ENCODE measurements at regions of chr7 and their contacts with region 1.

Region 1: GRCh38 chr7:129343099-129343700 is 91.0 kb upstream of the STRIP2 start:
- DNase-seq: no peak
- H3K4me3 ChIP-seq: no peak overlapping the region
- H3K27ac ChIP-seq: no peak overlapping the region
- H3K27me3 ChIP-seq: no peaks in the 10 kb centered on the region
- CTCF ChIP-seq: peak; percentile 76

Region 2: GRCh38 chr7:129308047-129308446 is 35.2 kb before region 1 on chr7:
- CTCF ChIA-PET with region 1: no interaction called
- POLR2A ChIA-PET with region 1: no interaction called
- DNase-seq: no peak
- H3K4me3 ChIP-seq: no peak overlapping the region
- H3K27ac ChIP-seq: no peak overlapping the region
- H3K27me3 ChIP-seq: no peaks in the 10 kb centered on the region
- CTCF ChIP-seq: no peak

Region 3: GRCh38 chr7:129332284-129333035 is 10.7 kb before region 1 on chr7:
- CTCF ChIA-PET with region 1: interaction called, 35 read pairs
- POLR2A ChIA-PET with region 1: no interaction called
- DNase-seq: peak; percentile 66
- H3K4me3 ChIP-seq: no peak overlapping the region; the same call in 1 of the 2 replicates
- H3K27ac ChIP-seq: peak overlapping the region; percentile 87
- H3K27me3 ChIP-seq: no peaks in the 10 kb centered on the region
- CTCF ChIP-seq: no peak

Region 4: DNA sequence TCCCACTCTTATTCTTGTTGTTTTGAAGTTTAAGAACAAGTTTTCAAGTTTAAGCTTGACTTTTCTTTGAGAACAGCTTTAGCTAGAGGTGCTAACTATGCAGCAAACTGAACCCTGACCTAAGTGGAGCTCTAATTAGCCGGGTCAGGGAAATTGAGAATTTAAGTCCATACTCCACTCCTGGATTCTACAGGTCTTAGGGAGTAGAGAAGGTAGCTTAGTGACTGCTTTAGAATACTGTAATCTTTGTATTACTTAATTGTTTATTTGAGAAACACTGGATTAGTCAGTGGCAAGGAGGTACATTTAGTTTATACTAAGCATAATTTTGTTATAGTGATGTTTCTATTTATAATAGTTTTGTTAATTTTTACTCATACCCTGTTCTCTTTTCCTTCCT is 16.4 kb after region 1 on chr7:
- CTCF ChIA-PET with region 1: interaction called, 26 read pairs
- POLR2A ChIA-PET with region 1: interaction called, 3 read pairs
- DNase-seq: no peak
- H3K4me3 ChIP-seq: no peak overlapping the region
- H3K27ac ChIP-seq: no peak overlapping the region
- H3K27me3 ChIP-seq: no peaks in the 10 kb centered on the region
- CTCF ChIP-seq: no peak

Region 5: GRCh38 chr7:129376076-129376777 is 33.0 kb after region 1 on chr7:
- CTCF ChIA-PET with region 1: interaction called, 16 read pairs
- POLR2A ChIA-PET with region 1: no interaction called
- DNase-seq: no peak
- H3K4me3 ChIP-seq: no peak overlapping the region
- H3K27ac ChIP-seq: no peak overlapping the region
- H3K27me3 ChIP-seq: no peaks in the 10 kb centered on the region
- CTCF ChIP-seq: peak; percentile 72

Region 6: GRCh38 chr7:129468087-129468486 is 124.9 kb after region 1 on chr7:
- CTCF ChIA-PET with region 1: interaction called, 38 read pairs
- POLR2A ChIA-PET with region 1: no interaction called
- DNase-seq: peak; percentile 10
- H3K4me3 ChIP-seq: no peak overlapping the region
- H3K27ac ChIP-seq: no peak overlapping the region
- H3K27me3 ChIP-seq: no peaks in the 10 kb centered on the region
- CTCF ChIP-seq: no peak

Region 7: DNA sequence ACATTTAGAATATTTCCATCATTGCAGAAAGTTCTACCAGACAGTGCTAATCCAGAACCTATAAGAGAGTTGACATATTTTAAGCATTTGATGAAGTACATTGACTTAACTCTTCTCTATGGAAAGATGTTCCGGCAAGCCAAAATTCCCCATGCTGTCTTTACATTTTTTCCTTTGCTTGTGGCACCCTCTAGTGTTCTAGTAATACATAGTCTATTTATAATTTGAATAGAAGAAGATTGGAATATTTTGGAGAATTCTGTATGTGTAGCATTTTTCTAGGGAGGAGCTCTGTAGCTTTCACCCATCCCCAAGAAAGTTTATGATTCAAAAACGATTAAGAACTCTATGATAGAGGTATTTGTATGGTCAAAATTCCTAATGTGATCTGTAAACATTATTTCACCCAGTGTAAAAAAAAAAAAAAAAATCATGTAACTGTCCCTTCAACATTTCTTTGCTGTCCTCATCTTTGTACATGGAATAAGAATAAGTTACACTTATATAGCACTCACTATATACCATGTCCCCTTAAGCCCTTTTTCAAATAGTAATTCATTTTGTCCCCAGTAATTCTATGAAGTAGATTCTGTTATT is 301.5 kb after region 1 on chr7:
- CTCF ChIA-PET with region 1: interaction called, 20 read pairs
- POLR2A ChIA-PET with region 1: no interaction called
- DNase-seq: peak; percentile 20
- H3K4me3 ChIP-seq: no peak overlapping the region
- H3K27ac ChIP-seq: no peak overlapping the region
- H3K27me3 ChIP-seq: no peaks in the 10 kb centered on the region
- CTCF ChIP-seq: peak; percentile 58

Region 8: GRCh38 chr7:129703751-129704150 is 360.6 kb after region 1 on chr7:
- CTCF ChIA-PET with region 1: interaction called, 12 read pairs
- POLR2A ChIA-PET with region 1: no interaction called
- DNase-seq: no peak
- H3K4me3 ChIP-seq: no peak overlapping the region
- H3K27ac ChIP-seq: no peak overlapping the region
- H3K27me3 ChIP-seq: no peaks in the 10 kb centered on the region
- CTCF ChIP-seq: no peak